Dendritic cell treated with granulocyte-macrophage colony-stimulating factor and Interleukin-4, amounts not matched to agents 40 ng/mL and 50 ng/mL, for 4 days (primary cell): ENCODE measurements at regions of chr11 and their contacts with region 1.

Region 1: DNA sequence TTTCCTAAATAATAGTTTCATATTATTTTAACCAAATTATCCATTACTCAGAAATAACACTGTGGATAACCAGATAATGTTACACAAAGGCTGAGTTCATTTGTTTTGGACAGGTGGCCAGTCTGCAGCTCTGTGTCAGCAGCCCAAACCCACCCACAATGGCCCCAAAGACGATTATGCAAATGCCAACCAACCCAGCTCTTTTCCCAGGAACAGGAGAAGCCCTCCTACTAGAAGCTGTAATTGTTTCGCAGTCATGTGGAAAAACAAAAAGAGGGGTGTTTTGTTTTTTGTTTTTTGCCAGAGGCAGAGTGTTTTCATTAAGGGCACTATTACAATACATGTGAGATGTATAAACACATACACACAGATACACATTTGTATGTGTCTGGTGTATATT is 102.1 kb downstream of the FCHSD2 start:
- H3K4me3 Mint-ChIP-seq: no peak overlapping the region
- H3K27ac Mint-ChIP-seq: no peak overlapping the region
- H3K4me1 Mint-ChIP-seq: peaks cover 5% of the 10 kb centered on the region
- H3K27me3 Mint-ChIP-seq: no peaks in the 10 kb centered on the region

Region 2: DNA sequence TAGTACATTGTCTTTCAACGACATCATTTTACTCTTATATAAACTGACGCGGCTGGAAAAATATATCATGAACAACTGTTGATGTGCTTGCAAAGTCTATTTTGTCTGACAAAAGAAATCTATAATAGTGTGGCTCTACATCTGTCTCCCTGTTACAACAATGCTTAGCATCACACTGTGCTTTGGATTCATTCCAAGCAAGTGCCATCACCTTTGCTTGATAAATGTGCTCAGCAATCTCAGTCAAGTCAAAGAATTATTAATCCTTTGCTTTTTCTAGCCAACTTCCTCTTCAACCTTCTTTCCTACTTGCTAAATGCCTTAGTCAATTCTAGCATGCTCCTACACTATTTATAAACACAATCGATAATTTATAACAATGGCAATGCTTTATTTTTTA is 38.4 kb before region 1 on chr11:
- intact Hi-C with region 1: no loop called
- H3K4me3 Mint-ChIP-seq: no peak overlapping the region
- H3K27ac Mint-ChIP-seq: no peak overlapping the region
- H3K4me1 Mint-ChIP-seq: peaks cover 39% of the 10 kb centered on the region
- H3K27me3 Mint-ChIP-seq: no peaks in the 10 kb centered on the region

Region 3: GRCh38 chr11:73077454-73077853 is 37.4 kb after region 1 on chr11:
- intact Hi-C with region 1: loop called (anchors 5 kb)
- H3K4me3 Mint-ChIP-seq: no peak overlapping the region
- H3K27ac Mint-ChIP-seq: no peak overlapping the region
- H3K4me1 Mint-ChIP-seq: peaks cover 16% of the 10 kb centered on the region
- H3K27me3 Mint-ChIP-seq: no peaks in the 10 kb centered on the region

Region 4: GRCh38 chr11:73177778-73178577 is 137.9 kb after region 1 on chr11:
- intact Hi-C with region 1: no loop called
- H3K4me3 Mint-ChIP-seq: no peak overlapping the region
- H3K27ac Mint-ChIP-seq: peak overlapping the region; percentile 52
- H3K4me1 Mint-ChIP-seq: peaks cover 30% of the 10 kb centered on the region
- H3K27me3 Mint-ChIP-seq: peaks cover 3% of the 10 kb centered on the region